ENCODE measurements at regions of chr1 and their contacts with region 1.

Region 1: GRCh38 chr1:16498573-16499413 is 15.3 kb downstream of the RNU1-1 start:
- DNase-seq: peak; percentile 70 to 93 (median 82)
- ATAC-seq: peak; percentile 90
- H3K4me3 ChIP-seq: peak overlapping the region; percentile 92
- H3K4me3 Mint-ChIP-seq: peak overlapping the region; percentile 80
- H3K27ac ChIP-seq: peak overlapping the region in 1 of 2 donors; percentile 21
- H3K27ac Mint-ChIP-seq: peak overlapping the region; percentile 75
- H3K4me1 ChIP-seq: peaks cover 20% of the 10 kb centered on the region
- H3K4me1 Mint-ChIP-seq: peaks cover 25% of the 10 kb centered on the region
- H3K27me3 ChIP-seq: no peaks in the 10 kb centered on the region
- H3K27me3 Mint-ChIP-seq: no peaks in the 10 kb centered on the region
- CTCF ChIP-seq: no peak

Region 2: DNA sequence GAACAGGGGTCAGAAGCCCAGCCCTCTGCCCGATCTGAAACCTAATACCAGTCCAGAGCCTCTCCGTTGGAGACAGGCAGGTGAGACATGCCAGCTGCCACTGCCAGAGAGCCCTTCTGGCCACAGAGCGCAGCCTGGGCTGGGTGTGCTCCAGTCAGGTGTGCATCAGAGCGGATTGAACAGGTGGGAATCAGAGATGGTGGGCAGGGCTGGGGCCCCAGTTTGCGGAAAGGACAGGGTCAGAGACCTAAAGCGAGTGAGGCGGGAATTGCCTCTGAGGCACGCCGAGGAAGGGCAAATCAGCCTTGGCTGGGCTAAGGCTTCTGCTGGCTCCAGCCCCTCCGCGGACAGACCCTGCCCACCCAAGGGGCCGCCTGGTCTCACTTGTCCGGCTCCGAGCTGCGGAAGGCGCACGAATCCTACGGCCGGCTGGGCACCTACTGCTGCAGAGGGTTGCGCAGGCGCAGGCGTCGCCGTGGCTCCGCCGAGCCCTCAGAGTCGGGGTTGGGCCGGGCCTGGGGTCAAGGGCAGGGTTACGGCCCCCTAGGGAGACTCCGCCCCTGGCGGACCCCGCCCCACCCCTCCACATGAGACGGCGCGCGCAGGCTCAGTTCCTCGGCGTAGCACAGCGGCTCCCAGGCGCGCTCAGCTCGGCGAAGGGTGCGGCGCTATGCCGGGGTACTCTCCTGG is 272.2 kb before region 1 on chr1:
- CTCF ChIA-PET with region 1: no interaction called
- POLR2A ChIA-PET with region 1: no interaction called
- intact Hi-C with region 1: no loop called
- DNase-seq: no peak
- ATAC-seq: no peak
- H3K4me3 ChIP-seq: no peak overlapping the region
- H3K4me3 Mint-ChIP-seq: no peak overlapping the region
- H3K27ac ChIP-seq: no peak overlapping the region
- H3K27ac Mint-ChIP-seq: no peak overlapping the region
- H3K4me1 ChIP-seq: peaks cover 18% of the 10 kb centered on the region
- H3K4me1 Mint-ChIP-seq: no peaks in the 10 kb centered on the region
- H3K27me3 ChIP-seq: peaks cover 33 to 34% of the 10 kb centered on the region in 2 experiments
- H3K27me3 Mint-ChIP-seq: peaks cover 46% of the 10 kb centered on the region
- CTCF ChIP-seq: no peak

Region 3: DNA sequence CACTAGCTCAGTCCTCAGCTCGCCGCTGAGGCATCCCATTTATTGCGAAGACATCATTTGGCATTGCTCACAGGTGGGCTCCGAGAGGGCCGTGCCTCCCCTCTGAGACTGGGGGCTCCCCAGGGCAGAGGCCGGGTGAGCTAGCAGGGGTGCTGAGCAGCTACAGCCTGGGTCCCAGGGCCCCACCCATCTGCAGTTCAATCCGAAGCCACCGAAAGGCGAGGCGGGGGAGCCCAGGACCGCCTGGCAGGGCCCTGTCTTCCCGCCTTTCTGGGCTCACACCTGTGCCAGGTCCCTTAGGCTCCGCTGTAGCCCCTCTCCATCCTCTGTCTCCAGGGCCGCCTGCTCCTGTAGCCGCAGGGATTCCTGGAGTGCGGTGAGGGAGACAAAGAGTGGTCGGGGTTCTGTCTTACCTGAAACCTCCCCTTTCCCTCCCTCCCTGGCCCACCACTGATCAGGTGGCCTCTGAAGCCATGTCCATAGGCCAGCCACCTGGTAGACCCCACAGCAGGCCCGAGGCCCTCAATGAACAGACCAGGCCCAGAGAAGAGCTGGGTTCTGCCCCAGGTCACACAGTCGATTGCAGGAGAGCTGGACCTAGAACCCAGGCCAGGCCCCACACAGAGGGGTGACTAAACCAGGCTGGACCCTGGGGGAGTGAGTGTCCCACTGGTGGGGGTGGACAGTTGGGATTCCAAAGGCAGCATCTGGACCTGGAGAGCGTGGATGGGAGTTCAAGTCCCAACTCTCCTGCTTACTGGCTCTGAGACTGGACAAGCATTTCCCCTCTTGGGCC is 132.7 kb after region 1 on chr1:
- CTCF ChIA-PET with region 1: no interaction called
- POLR2A ChIA-PET with region 1: no interaction called
- intact Hi-C with region 1: loop called in 1 of 2 experiments (anchors 10 kb)
- DNase-seq: peak in 4 of 14 experiments; percentile 2 to 47 (median 22)
- ATAC-seq: no peak
- H3K4me3 ChIP-seq: no peak overlapping the region
- H3K4me3 Mint-ChIP-seq: no peak overlapping the region
- H3K27ac ChIP-seq: no peak overlapping the region
- H3K27ac Mint-ChIP-seq: no peak overlapping the region
- H3K4me1 ChIP-seq: no peaks in the 10 kb centered on the region
- H3K4me1 Mint-ChIP-seq: peaks cover 7% of the 10 kb centered on the region
- H3K27me3 ChIP-seq: no peaks in the 10 kb centered on the region
- H3K27me3 Mint-ChIP-seq: no peaks in the 10 kb centered on the region
- CTCF ChIP-seq: no peak

Measured in CD4-positive, alpha-beta T cell (primary cell).